Calu3 (cell line): ENCODE measurements at regions of chr10 and their contacts with region 1.

Region 1: DNA sequence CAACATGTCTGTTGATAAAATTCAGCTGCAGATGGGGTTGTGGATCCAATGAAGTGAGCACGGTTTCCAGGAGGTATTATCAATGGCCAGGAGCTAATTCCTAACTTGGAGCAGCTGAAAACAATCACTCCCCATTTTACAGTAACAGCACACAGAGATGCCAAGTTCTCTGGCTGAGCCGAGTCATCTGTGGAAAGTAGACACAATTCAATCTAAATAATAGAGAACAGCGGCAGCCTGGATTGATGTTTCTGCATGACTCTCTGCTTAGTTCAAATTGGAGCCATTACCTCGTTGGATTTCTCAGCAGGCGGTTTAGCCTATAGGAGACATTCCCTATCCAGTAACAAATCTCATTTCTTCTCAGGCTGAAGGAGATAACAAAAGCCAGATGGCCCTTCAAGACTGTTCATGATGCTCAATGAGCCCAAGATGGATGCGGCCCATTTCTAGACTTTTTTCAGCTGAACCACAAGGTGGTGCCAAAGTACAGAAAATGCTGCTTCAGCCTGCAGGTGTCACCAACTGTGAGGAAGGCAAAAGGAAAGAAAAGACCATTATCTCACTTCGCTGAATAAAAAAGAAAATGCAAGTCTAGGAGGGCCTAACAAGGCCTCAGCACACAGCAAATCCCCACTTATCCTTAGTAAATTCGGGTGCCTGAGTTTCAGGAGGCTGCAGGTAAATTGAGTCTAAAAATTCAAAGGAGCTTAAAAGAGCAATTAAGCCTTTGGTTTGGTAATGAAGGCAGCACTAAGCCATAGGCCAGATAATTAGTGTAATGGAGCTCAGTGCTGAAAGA is 83.7 kb downstream of the SLC16A9 start:
- DNase-seq: peak; percentile 54
- H3K4me3 Mint-ChIP-seq: no peak overlapping the region
- H3K27ac Mint-ChIP-seq: no peak overlapping the region
- H3K4me1 Mint-ChIP-seq: peaks cover 7% of the 10 kb centered on the region
- H3K27me3 Mint-ChIP-seq: peaks cover 53% of the 10 kb centered on the region
- CTCF ChIP-seq: peak; percentile 86

Region 2: DNA sequence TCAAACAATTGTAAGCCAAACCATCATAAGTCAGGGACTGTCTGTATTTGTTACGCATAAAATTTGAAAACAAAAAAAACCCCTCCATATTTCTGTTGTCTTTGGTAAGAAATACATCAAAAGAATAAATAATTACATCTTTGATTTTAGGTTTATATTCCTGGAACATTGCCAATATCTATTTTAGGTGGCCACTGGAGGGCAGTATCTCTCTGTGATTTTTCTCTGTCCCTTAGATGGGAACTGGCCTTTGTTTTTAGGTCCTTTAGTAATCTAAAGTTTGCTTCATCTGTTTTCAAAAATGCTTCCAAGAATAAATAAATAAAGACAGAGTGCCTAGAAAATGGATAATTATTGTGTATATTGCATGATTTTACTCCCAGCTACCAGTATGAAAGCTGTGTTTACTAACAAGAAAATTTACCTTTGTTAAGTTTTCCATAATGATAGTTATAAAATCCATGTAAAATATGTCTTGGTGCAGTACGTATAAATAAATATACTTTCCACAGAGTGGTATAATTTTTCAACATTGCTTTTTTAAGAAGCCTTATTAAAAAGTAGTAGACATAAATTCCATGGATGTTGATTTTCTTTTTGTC is 385.2 kb before region 1 on chr10:
- CTCF ChIA-PET with region 1: no interaction called
- intact Hi-C with region 1: loop called (anchors 1 kb)
- DNase-seq: peak; percentile 49
- H3K4me3 Mint-ChIP-seq: no peak overlapping the region
- H3K27ac Mint-ChIP-seq: no peak overlapping the region
- H3K4me1 Mint-ChIP-seq: no peaks in the 10 kb centered on the region
- H3K27me3 Mint-ChIP-seq: peaks cover 47% of the 10 kb centered on the region
- CTCF ChIP-seq: peak; percentile 60

Region 3: DNA sequence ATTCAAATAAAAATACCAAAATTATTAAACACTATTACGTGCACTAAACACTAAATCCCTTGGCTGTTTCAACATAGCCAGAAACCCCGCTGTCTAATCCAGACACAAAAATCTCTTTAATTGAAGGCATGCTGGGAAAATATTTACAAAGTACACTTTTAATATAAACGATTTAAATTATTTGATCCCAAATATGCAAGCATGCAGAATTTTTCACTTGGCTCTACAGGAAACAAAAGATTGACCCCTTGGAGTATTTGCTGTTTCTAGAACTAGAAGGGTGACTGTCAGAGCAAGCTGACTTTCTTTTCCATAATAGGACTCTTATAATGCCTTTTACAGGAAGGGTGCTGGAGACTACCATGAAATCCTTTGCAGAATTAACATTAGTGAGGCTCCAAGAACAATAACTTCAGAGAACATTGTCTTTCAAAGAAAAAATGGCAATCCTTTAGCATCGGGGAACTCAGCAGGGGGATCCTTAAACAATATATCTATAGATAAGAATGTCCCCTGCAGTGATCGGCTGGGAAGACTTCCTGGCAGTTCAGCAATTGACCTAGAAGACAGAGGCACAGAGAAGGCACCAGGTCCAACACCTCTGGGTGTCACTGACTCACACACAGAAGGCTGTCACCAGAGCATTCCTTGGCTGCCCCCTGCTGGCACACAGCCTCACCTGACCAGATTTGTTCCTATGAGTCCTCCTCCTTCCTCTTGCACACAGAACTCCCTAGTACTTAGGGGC is 183.1 kb after region 1 on chr10:
- CTCF ChIA-PET with region 1: interaction called, 4 read pairs
- intact Hi-C with region 1: loop called (anchors 1 kb)
- DNase-seq: peak; percentile 87
- H3K4me3 Mint-ChIP-seq: no peak overlapping the region
- H3K27ac Mint-ChIP-seq: no peak overlapping the region
- H3K4me1 Mint-ChIP-seq: no peaks in the 10 kb centered on the region
- H3K27me3 Mint-ChIP-seq: no peaks in the 10 kb centered on the region
- CTCF ChIP-seq: peak; percentile 81

Region 4: GRCh38 chr10:59830601-59831259 is 204.8 kb after region 1 on chr10:
- CTCF ChIA-PET with region 1: interaction called, 9 read pairs
- intact Hi-C with region 1: loop called (anchors 1 kb)
- DNase-seq: peak; percentile 66
- H3K4me3 Mint-ChIP-seq: no peak overlapping the region
- H3K27ac Mint-ChIP-seq: no peak overlapping the region
- H3K4me1 Mint-ChIP-seq: peaks cover 15% of the 10 kb centered on the region
- H3K27me3 Mint-ChIP-seq: no peaks in the 10 kb centered on the region
- CTCF ChIP-seq: peak; percentile 85

Region 5: GRCh38 chr10:60048091-60048501 is 422.2 kb after region 1 on chr10:
- CTCF ChIA-PET with region 1: interaction called, 3 read pairs
- intact Hi-C with region 1: loop called (anchors 1 kb)
- DNase-seq: peak; percentile 48
- H3K4me3 Mint-ChIP-seq: no peak overlapping the region
- H3K27ac Mint-ChIP-seq: no peak overlapping the region
- H3K4me1 Mint-ChIP-seq: no peaks in the 10 kb centered on the region
- H3K27me3 Mint-ChIP-seq: no peaks in the 10 kb centered on the region
- CTCF ChIP-seq: peak; percentile 57

Region 6: GRCh38 chr10:60208676-60209269 is 582.9 kb after region 1 on chr10:
- CTCF ChIA-PET with region 1: no interaction called
- intact Hi-C with region 1: loop called (anchors 5 kb)
- DNase-seq: peak; percentile 19
- H3K4me3 Mint-ChIP-seq: no peak overlapping the region
- H3K27ac Mint-ChIP-seq: no peak overlapping the region
- H3K4me1 Mint-ChIP-seq: peaks cover 11% of the 10 kb centered on the region
- H3K27me3 Mint-ChIP-seq: no peaks in the 10 kb centered on the region
- CTCF ChIP-seq: peak; percentile 85